CD8-positive, alpha-beta memory T cell (primary cell): ENCODE measurements at regions of chr21 and their contacts with region 1.

Region 1: DNA sequence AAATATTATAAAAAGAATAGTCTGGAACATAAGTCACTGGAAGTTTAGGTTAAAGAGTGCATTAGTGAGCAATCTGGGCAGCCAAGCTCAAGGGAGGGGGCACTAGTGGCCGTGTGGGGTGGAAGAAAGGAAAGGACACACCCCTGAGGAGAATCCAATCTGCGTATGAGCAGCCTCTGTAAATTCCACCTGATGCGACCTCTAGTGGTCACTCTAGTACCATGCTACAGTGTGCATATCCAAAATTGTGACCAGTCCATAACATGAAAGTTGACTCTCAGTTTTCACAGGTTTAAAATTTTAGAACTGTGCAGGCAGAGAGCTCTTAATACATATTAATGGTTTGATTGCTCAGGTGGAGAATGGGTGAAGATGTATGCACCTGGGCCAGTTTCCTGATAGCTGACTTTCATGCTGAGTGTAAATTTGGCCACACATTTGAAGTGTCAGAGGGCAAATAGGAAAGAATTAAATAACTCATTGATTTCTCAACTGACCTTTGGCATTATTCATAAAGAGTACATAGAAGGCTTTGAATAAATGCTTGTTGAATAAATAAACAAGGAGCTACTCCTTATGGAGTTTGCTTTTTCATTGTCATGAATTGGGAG is 105.9 kb upstream of the C21orf91 start:
- DNase-seq: peak; percentile 14 to 61 (median 42)
- H3K4me3 ChIP-seq: no peak overlapping the region
- H3K4me3 Mint-ChIP-seq: no peak overlapping the region
- H3K27ac ChIP-seq: no peak overlapping the region
- H3K27ac Mint-ChIP-seq: no peak overlapping the region
- H3K4me1 ChIP-seq: no peaks in the 10 kb centered on the region
- H3K4me1 Mint-ChIP-seq: peaks cover 2 to 7% (median 4%) of the 10 kb centered on the region in 3 donors
- H3K27me3 ChIP-seq: no peaks in the 10 kb centered on the region
- H3K27me3 Mint-ChIP-seq: no peaks in the 10 kb centered on the region

Region 2: DNA sequence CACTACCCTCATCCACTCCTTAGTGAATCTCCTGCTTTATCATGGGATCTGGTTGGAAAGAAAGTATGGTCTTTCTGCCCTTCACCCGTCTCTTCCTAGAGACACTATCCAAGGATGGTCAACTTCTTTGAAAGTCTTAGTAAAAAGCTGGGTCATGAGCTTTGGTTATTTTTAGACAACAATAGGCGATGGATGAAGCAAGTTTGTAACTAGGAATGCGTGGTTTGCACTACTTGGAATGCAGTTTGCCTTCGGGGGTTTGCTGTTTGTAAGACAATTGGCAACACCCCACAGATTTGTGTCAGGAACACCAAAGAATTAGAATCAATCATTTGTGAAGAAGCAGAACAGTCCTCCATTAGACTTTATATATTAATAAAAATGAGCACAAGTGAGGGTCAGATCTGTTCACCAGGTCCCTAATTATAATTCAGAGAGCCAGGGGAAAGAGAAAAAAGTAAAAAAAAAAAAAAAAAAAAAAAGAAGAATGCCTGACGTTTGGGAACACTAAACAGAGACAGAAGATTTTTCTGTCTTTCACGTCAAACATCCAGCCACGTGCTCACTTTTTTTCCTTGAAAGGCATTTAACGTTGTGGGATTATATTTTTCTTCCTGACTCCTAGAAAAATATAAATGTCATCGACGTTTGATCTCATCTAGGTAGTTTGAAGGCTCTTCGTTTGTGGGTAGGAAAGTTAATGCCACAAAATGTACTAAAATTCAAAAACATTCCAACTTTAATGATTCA is 251.7 kb before region 1 on chr21:
- CTCF ChIA-PET with region 1: interaction called, 46 read pairs
- POLR2A ChIA-PET with region 1: no interaction called
- DNase-seq: no peak
- H3K4me3 ChIP-seq: no peak overlapping the region
- H3K4me3 Mint-ChIP-seq: no peak overlapping the region
- H3K27ac ChIP-seq: no peak overlapping the region
- H3K27ac Mint-ChIP-seq: no peak overlapping the region
- H3K4me1 ChIP-seq: no peaks in the 10 kb centered on the region
- H3K4me1 Mint-ChIP-seq: no peaks in the 10 kb centered on the region
- H3K27me3 ChIP-seq: no peaks in the 10 kb centered on the region
- H3K27me3 Mint-ChIP-seq: peaks cover 9 to 14% of the 10 kb centered on the region in 2 donors

Region 3: DNA sequence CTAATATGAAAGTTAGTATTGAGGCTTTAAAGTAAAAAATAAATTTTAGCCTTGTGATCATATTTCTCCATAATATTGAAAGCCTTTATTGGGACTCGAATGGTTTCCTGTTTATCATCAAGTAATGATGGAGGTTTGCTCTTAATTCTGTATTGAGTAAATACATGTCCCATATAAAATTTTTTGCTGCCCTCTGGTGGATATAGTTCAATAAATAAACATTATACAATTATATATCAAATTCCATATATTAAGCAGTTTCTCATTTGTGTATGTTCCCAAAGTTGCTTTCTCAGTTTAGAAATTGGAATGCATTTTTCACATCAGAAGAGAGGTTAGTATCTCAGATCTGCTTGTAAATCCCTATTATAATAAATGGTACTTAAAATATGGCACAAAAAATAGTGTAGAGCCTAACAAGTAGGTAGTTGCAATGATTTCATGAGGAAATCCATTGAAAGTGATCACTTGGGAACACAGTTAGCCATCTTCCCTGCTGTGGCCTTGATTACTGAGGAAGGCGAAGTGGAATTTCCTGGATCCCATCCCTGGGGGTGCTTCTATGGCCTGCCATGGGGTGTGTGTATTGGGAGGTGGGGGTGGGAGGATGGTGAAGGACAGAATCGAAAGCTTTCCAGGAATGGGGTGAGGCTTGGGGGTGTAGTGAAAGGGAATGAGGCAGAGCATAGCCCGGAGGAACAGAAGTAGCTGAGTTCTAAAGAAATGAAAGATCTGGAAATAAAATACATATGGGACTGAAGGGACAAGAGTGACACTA is 21.9 kb before region 1 on chr21:
- CTCF ChIA-PET with region 1: interaction called, 15 read pairs
- POLR2A ChIA-PET with region 1: no interaction called
- DNase-seq: peak in 2 of 5 donors; percentile 31 to 49
- H3K4me3 ChIP-seq: no peak overlapping the region
- H3K4me3 Mint-ChIP-seq: peak overlapping the region in 1 of 7 donors; percentile 25
- H3K27ac ChIP-seq: no peak overlapping the region
- H3K27ac Mint-ChIP-seq: peak overlapping the region in 1 of 8 donors; percentile 32
- H3K4me1 ChIP-seq: no peaks in the 10 kb centered on the region
- H3K4me1 Mint-ChIP-seq: peaks cover 0 to 21% (median 11%) of the 10 kb centered on the region in 3 donors
- H3K27me3 ChIP-seq: no peaks in the 10 kb centered on the region
- H3K27me3 Mint-ChIP-seq: peaks cover 0 to 4% of the 10 kb centered on the region in 2 donors